ENCODE measurements at regions of chr15 and their contacts with region 1.

Region 1: GRCh38 chr15:97009031-97009431 is 678.5 kb downstream of the NR2F2 start:
- DNase-seq: no peak
- ATAC-seq: no peak

Region 2: GRCh38 chr15:95296643-95297042 is 1712.4 kb before region 1 on chr15:
- intact Hi-C with region 1: loop called (anchors 5 kb)
- DNase-seq: no peak
- ATAC-seq: peak; percentile 43

Region 3: DNA sequence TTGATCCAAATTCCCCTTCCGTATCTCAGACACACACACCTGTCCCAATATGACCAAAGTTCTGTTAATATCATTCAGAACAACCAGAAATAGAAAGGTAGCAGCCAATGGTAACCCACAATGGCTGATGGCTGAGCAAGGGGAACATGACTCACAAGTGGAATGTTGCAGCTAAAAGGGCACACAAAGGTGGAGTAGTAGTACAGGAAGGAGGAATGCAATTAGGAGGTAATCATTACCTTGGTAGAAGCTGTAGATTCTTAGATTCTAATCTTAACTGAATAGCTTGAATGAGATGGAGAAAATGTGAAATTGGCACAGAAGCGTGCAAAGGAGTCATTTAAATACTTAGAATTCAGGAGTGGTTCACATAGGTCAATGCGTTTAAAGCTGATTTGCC is 330.6 kb before region 1 on chr15:
- intact Hi-C with region 1: no loop called
- DNase-seq: no peak
- ATAC-seq: no peak

Region 4: DNA sequence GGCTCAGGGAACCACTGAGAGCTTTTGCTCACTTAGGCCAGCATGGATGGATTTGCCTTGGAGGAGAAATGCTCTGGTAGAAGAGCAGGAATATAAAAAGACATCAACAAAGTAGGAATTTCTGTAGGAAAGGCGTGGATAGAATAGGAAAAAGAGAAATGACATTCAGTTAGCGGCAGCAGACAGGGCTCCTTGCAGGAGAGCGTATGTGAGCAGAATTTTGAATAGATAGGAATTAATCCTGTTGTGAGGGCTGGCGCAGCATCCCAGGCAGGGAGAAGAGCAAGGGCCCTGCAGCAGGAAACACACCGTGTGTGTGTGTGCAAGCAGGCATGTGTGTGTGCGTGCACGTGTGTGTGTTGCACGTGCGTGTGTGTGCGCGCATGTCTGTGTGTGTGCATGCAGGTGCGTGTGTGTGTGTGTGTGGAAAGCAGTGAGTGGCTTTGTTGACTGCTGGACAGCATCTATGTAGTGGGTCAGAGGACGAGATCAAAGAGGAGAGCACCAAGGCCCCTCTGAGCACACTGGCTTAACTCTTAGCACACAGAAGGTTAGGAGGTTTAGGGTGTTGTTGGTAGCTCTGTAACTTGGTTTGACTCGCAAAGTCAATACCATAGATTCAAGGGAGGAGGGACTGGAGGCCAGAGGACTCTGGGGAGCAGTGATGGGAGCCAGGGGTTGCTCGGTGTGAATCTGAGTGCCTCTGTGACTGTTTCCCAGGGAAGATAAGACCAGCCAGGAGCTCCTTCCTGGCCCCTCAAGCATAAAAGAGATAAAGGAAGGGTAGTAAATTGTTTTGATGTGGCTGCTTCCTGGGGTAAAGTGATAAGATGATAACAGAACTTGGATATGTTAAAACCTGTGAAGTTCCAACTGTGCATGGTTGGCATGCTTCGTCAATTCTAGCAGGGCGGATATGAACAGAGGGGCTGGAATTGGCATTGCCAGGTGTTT is 39.0 kb before region 1 on chr15:
- intact Hi-C with region 1: no loop called
- DNase-seq: no peak
- ATAC-seq: no peak

Measured in sciatic nerve (tissue), 2 donors.